ENCODE measurements at regions of chr19 and their contacts with region 1.

Region 1: DNA sequence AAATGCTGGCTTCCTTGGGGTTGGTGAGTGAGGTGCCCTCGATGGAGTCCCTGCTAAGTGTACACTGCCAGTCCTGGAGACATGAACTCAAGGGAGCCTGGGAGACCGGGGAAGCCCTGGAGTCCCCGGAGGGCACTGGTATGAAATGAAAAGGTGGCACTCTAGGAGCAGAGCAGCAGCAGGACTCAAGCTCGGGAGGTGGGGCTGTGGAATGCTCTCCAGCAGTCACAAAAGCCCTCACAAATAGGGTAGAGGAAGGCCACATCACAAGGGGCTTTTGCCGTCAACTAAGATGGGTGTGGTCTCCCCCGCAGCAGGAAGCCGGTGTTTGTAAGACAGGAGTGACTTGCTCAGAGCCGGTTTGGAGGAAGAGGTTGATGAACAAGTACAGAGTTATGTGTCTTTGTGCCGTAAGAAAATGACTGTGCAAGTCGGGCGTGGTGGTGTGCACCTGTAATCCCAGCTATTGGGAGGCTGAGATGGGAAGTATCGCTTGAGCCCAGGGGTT is 19.3 kb downstream of the CCNE1 start:
- DNase-seq: peak; percentile 76
- H3K4me3 Mint-ChIP-seq: peak overlapping the region; percentile 71
- H3K27ac Mint-ChIP-seq: peak overlapping the region; percentile 94
- H3K4me1 Mint-ChIP-seq: peaks cover 50% of the 10 kb centered on the region
- H3K27me3 Mint-ChIP-seq: no peaks in the 10 kb centered on the region

Region 2: DNA sequence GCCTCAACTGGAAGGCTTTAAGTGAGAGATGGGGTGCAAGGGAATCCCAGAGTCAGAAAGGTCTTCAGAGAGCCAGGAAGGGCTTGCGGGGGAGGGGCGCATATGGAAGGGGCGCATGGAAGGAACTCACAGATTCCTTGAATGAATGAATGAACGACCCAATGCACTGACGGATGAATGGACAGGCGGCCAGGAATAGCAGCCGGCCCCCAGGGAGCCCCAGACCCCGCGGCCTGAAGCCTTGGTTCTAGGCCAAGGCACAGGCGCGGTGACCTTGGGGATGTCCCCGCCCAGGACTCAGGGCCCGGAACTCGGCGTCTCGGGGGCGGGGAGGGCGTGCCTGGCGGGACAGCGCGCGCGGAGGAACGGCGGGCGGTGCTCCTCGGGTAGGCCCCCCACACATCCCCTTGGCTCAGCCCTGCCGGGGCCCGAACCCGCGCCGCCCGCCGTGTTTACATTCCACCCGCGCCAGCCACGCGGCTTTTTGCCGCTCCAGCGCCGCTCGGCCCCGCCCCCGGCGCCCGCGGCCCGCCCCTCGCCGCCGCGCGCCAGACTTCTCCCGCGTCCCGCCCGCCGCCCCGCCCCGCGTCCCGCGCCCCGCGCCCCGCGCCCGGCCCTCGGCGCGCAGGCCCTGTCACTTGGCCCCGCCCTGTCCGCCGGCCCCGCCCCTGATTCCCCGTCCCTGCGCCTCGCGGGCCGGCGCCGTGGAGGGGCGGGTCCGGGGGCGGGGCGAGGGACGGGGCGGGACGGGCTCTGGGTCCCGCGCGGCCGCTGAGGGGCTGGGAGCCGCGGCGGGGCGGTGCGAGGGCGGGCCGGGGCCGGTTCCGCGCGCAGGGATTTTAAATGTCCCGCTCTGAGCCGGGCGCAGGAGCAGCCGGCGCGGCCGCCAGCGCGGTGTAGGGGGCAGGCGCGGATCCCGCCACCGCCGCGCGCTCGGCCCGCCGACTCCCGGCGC is 19.7 kb before region 1 on chr19 and contains the start of gene CCNE1:
- intact Hi-C with region 1: loop called (anchors 1 kb)
- DNase-seq: peak; percentile 92
- H3K4me3 Mint-ChIP-seq: peak within 1 kb of the TSS; percentile 97
- H3K27ac Mint-ChIP-seq: peak within 1 kb of the TSS; percentile 92
- H3K4me1 Mint-ChIP-seq: peaks cover 38% of the 10 kb centered on the region
- H3K27me3 Mint-ChIP-seq: no peaks in the 10 kb centered on the region
- total RNA-seq, gene CCNE1: 55.1 and 58.4 TPM in 2 replicates

Region 3: GRCh38 chr19:29844891-29845572 is 13.9 kb after region 1 on chr19:
- intact Hi-C with region 1: loop called (anchors 2 kb)
- DNase-seq: peak; percentile 93
- H3K4me3 Mint-ChIP-seq: peak overlapping the region; percentile 84
- H3K27ac Mint-ChIP-seq: peak overlapping the region; percentile 80
- H3K4me1 Mint-ChIP-seq: peaks cover 30% of the 10 kb centered on the region
- H3K27me3 Mint-ChIP-seq: peaks cover 4% of the 10 kb centered on the region

Region 4: DNA sequence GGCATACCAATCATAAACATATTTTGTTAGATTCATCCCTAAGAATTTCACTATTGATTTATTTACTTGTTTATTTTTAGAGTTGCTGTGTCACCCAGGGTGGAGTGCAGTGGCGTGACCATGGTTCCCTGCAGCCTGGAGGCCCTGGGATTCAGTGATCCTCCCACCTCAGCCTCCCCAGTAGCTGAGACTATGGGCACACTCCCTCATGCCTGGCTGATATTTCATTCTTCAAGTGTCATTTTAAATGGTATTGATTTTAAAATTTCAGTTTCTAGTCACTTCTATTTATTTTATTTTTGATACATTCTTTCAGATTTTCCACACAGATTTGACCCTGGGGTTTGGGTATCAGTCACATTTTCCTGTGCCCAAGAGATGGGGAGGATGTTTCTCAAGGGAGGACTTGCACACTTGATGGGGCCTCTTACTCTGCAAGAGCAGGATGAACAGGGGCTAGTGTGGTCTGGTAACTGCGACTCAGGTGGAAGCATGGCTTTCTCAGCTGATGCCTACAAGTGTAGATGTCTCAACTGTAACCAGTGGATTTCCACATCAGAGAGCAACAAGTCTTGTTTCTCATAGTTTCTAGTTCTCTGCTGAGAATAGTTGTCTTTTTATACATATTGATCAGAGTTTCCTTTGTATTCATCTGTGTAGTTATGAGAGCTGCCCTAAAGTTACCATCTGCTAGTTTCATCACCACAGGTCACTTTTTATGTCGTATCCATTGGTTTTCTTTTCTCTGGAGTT is 20.9 kb after region 1 on chr19:
- intact Hi-C with region 1: loop called (anchors 1 kb)
- DNase-seq: no peak
- H3K4me3 Mint-ChIP-seq: no peak overlapping the region
- H3K27ac Mint-ChIP-seq: peak overlapping the region; percentile 80
- H3K4me1 Mint-ChIP-seq: peaks cover 16% of the 10 kb centered on the region
- H3K27me3 Mint-ChIP-seq: peaks cover 2% of the 10 kb centered on the region